MCF 10A (cell line): ENCODE measurements at regions of chr12 and their contacts with region 1.

Region 1: GRCh38 chr12:123659996-123660727 is 10.8 kb upstream of the TCTN2 start:
- DNase-seq: peak; percentile 88
- H3K4me3 Mint-ChIP-seq: no peak overlapping the region
- H3K27ac Mint-ChIP-seq: peak overlapping the region; percentile 49
- H3K4me1 Mint-ChIP-seq: peaks cover 6% of the 10 kb centered on the region
- H3K27me3 Mint-ChIP-seq: no peaks in the 10 kb centered on the region
- CTCF ChIP-seq: no peak

Region 2: DNA sequence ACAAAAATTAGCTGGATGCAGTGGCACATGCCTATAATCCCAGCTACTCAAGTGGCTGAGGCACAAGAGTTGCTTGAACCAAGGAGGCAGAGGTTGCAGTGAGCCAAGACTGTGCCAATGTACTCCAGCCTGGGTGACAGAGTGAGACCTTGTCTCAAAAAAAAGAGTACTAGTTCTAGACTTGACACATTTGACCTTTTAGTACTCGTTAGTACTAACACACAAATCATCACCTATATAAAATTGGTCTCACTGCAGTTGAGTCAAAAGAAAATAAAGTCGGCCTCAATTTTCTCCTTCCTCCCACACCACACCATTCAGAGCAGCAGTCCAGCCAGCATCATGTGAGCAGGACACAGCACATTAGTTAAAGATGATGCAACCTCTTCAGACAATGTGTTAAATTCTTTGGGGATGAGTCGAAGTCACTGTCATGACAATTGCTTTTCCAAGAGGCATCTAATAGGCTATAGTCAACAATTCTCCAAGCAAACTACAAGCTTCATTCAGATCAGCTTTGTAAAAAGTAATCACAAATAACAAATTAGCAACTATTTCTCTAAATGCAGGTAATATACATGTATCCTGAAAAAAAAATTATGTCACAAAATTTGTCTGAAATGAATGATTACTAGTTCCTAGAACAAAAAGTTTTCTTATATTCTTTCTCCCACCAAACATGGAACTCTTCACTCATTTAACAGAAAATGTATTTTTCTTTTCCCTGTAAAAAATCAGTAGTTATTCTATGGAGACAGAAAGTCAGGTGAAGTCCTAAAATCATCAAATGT is 1293.3 kb before region 1 on chr12:
- CTCF ChIA-PET with region 1: no interaction called
- POLR2A ChIA-PET with region 1: no interaction called
- intact Hi-C with region 1: no loop called
- DNase-seq: peak; percentile 86
- H3K4me3 Mint-ChIP-seq: peak overlapping the region; percentile 18
- H3K27ac Mint-ChIP-seq: peak overlapping the region; percentile 95
- H3K4me1 Mint-ChIP-seq: peaks cover 24% of the 10 kb centered on the region
- H3K27me3 Mint-ChIP-seq: no peaks in the 10 kb centered on the region
- CTCF ChIP-seq: no peak

Region 3: DNA sequence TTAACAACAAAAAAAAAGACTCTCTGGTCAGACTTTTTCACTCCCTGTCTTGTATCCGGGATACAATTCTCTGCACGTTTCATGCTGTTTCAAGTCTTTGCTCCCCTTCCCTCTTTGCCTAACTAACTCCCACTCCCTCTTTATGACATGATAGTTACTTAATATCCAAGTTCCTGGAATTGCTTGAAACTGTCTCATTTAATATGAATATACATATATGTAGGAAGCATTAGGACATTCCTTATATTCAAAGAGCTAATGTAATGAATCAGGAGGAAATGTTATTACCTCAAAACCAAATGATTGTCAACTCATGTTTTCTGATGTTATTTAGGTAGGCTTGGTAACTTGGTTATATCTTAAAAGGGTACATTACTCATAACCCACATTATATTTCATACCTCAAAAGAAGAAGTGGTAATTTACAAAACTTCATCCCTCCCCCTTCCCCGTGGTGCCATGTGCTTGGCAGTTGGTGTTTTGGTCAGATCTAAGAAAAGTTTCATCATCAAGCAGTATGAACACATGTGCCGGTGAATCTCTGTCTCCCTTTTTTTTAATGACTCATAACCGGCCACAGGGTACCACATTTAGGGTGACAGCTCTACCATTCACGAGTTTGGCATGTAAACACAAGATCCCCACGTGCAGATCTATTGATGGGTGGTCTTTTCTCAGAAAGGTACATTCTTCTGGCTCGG is 1013.5 kb before region 1 on chr12:
- CTCF ChIA-PET with region 1: no interaction called
- POLR2A ChIA-PET with region 1: no interaction called
- intact Hi-C with region 1: no loop called
- DNase-seq: peak; percentile 82
- H3K4me3 Mint-ChIP-seq: no peak overlapping the region
- H3K27ac Mint-ChIP-seq: peak overlapping the region; percentile 72
- H3K4me1 Mint-ChIP-seq: peaks cover 9% of the 10 kb centered on the region
- H3K27me3 Mint-ChIP-seq: no peaks in the 10 kb centered on the region
- CTCF ChIP-seq: no peak

Region 4: DNA sequence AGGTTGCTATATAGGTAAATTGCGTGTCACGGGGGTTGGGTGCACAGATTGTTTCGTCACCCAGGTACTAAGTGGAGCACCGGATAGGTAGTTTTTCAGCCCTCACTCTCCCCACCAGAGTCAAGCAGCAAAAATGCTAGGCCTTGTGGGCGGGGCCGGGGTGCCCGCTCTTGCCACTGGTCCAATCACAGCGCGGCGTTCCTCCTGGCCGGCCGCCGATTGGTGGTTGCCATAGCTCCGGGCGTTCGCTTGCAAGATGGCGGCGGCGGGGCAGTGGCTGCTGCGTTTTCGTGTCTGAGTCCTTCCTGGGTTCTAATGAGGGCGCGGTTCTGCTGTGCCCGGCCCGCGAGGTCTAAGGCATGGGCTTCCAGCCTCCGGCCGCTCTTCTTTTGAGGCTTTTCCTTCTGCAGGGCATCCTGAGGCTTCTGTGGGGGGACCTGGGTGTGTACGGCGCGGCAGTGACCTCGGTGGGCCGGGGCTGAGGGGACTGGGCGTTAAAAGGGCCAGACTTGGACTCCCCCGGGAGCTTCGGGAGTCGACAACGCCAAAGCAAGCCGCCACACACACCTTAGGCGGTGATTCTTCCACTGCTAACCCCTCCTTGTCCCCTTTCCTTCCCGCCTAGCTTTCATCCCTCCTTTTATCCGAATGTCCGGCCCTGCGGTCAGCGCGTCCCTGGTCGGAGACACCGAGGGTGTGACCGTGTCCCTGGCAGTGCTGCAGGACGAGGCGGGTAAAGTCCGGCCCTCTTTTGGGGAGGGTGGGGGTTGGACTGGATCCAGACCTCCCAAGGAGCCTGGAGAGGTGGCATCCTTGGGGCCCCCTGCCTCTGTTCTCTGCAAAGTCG is 10.9 kb after region 1 on chr12 and contains the start of gene TCTN2:
- CTCF ChIA-PET with region 1: interaction called, 4 read pairs
- POLR2A ChIA-PET with region 1: interaction called, 26 read pairs
- intact Hi-C with region 1: no loop called
- DNase-seq: peak; percentile 89
- H3K4me3 Mint-ChIP-seq: peak within 1 kb of the TSS; percentile 79
- H3K27ac Mint-ChIP-seq: peak within 1 kb of the TSS; percentile 57
- H3K4me1 Mint-ChIP-seq: peaks cover 16% of the 10 kb centered on the region
- H3K27me3 Mint-ChIP-seq: no peaks in the 10 kb centered on the region
- CTCF ChIP-seq: no peak
- total RNA-seq, gene TCTN2: 5.0 and 9.4 TPM in 2 replicates

Region 5: GRCh38 chr12:123713398-123713797 is 53.2 kb after region 1 on chr12:
- CTCF ChIA-PET with region 1: interaction called, 6 read pairs
- POLR2A ChIA-PET with region 1: interaction called, 27 read pairs
- intact Hi-C with region 1: loop called (anchors 2 kb)
- DNase-seq: peak; percentile 14
- H3K4me3 Mint-ChIP-seq: peak overlapping the region; percentile 91
- H3K27ac Mint-ChIP-seq: peak overlapping the region; percentile 93
- H3K4me1 Mint-ChIP-seq: peaks cover 16% of the 10 kb centered on the region
- H3K27me3 Mint-ChIP-seq: no peaks in the 10 kb centered on the region
- CTCF ChIP-seq: no peak

Region 6: DNA sequence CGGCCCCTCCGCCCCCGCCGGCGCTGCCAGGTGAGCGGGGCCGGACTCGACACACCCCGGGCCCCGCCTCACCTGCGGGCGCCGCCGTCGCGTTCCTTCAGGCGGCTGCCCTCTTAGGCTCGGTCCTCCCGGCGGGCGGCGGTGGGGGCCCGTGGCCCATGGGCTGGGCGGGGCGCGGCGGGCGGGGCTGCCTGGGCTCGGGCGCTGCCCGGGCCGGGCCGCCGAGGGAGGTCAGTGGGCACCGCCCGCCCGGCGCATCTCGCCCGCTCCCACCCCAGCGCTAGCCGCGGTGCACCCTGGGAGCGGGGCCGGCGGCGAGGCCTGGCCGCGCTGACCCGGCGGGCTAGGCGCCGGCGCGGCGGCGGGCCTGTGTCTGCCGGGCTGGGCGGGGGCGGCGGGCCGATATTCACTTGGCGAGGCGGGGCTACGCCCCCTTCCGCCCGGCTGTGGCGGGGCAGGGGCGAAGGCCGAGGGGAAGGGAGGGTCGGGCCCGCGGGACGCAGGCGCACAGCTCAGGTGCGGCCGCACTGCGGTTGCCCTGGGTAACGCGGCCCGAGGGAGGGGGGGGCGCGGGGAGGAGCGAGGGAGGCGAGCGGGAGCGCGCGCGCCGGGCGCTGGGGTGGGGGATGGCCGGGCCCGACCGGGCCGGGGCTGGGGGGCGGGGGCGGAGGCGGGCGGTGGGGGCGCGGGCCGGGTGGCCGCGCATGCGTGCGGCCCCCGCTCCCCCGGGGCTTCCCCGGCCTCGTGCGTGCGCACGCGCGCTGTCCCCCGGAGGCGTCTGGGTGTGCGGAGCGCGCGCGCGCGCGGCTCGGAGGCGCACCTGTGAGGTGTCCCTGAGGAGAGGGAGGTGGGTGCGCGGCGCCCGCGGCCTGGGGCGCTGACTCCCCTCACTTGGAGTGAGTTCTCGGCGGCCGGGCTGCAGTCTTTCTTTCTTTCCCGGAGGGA is 312.6 kb after region 1 on chr12 and contains the starts of genes CCDC92 and ZNF664:
- CTCF ChIA-PET with region 1: interaction called, 10 read pairs
- POLR2A ChIA-PET with region 1: interaction called, 3 read pairs
- intact Hi-C with region 1: no loop called
- DNase-seq: peak; percentile 83
- H3K4me3 Mint-ChIP-seq: peak within 1 kb of the TSS; percentile 95
- H3K27ac Mint-ChIP-seq: peak within 1 kb of the TSS; percentile 92
- H3K4me1 Mint-ChIP-seq: peaks cover 24% of the 10 kb centered on the region
- H3K27me3 Mint-ChIP-seq: no peaks in the 10 kb centered on the region
- CTCF ChIP-seq: peak; percentile 21
- total RNA-seq, gene CCDC92: 30.9 and 32.3 TPM in 2 replicates
- total RNA-seq, gene ZNF664: 123 and 141 TPM in 2 replicates

Region 7: DNA sequence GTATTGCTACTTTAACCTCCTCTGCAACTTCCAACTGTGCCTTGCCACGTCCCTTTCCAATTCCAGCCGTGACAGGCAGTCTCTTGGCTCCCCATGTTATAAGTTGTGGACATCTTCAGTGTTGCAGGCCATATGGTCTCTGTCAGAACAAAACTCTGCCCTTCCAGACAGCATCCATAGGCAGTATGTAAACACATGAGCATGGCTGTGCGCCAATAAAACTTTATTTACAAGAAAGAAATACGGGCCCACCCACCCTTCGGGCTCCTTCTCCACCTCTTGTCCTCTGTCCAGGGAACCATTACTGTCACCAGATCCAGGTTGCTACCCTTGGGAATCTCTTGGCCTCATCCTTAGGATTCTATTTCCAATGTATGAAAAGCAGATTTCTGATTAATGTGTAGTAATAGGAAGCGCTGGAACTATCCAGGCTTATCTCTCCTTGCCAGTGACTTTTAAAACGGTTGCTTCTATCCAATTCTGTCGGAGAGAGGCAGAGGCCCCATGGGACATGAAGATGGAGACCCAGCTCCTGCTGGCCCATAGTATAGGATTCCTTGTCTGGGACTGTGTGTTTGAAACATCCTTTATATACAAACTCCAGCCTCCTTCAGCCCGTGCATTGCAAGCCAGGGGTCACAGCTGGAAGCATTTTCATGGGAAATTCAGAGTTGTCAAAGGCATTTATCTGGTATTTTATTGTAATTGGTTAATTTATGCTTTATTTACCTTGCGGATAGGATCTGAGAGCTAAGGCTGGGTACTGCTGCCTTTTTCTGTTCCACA is 427.3 kb after region 1 on chr12:
- CTCF ChIA-PET with region 1: no interaction called
- POLR2A ChIA-PET with region 1: no interaction called
- intact Hi-C with region 1: no loop called
- DNase-seq: no peak
- H3K4me3 Mint-ChIP-seq: no peak overlapping the region
- H3K27ac Mint-ChIP-seq: no peak overlapping the region
- H3K4me1 Mint-ChIP-seq: no peaks in the 10 kb centered on the region
- H3K27me3 Mint-ChIP-seq: no peaks in the 10 kb centered on the region
- CTCF ChIP-seq: no peak